ENCODE measurements at regions of chr4 and their contacts with region 1.

Region 1: DNA sequence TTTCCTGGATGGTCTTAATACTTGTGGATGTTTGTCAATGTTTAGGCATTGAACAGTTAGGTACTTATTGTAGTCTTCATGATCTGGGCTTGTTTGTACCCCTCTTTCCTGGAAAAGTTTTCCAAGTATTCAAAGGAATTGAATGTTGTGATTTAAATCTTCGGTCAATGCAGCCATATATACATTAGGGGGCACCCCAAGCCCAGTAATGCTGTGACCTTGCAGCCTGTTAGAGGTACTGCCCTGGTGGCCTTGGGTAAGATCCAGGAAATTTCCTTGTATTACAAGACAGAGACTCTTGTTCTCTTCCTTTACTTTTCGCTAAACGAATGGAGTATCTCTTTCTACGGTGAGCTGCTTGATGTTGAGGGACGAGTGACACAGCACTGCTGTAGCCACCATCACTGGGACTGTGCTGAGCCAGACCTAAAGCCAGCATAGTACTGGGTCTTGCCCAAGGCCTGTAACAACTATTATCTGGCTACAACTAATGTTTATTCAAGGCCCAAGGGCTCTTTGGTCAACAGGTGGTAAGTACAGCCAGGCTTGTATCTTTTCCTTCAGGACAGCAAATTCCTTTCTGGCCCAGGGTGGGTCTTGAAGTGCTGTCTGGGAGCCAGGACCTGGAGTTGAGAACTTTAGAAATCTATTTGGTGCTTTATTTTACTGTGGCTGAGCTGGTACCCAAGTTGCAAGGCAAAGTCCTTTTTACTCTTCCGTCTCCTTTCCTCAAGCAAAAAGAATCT is 118.3 kb upstream of the ATOH1 start:
- DNase-seq: no peak
- ATAC-seq: peak; percentile 10
- H3K4me3 ChIP-seq: no peak overlapping the region
- H3K4me3 Mint-ChIP-seq: no peak overlapping the region
- H3K27ac ChIP-seq: no peak overlapping the region
- H3K27ac Mint-ChIP-seq: no peak overlapping the region
- H3K4me1 ChIP-seq: no peaks in the 10 kb centered on the region
- H3K4me1 Mint-ChIP-seq: no peaks in the 10 kb centered on the region
- H3K27me3 ChIP-seq: no peaks in the 10 kb centered on the region
- H3K27me3 Mint-ChIP-seq: peaks cover 3% of the 10 kb centered on the region
- CTCF ChIP-seq: no peak

Region 2: GRCh38 chr4:93217431-93217830 is 492.8 kb before region 1 on chr4:
- CTCF ChIA-PET with region 1: no interaction called
- POLR2A ChIA-PET with region 1: no interaction called
- intact Hi-C with region 1: no loop called
- DNase-seq: no peak
- ATAC-seq: no peak
- H3K4me3 ChIP-seq: no peak overlapping the region
- H3K4me3 Mint-ChIP-seq: no peak overlapping the region
- H3K27ac ChIP-seq: no peak overlapping the region
- H3K27ac Mint-ChIP-seq: no peak overlapping the region
- H3K4me1 ChIP-seq: no peaks in the 10 kb centered on the region
- H3K4me1 Mint-ChIP-seq: no peaks in the 10 kb centered on the region
- H3K27me3 ChIP-seq: no peaks in the 10 kb centered on the region
- H3K27me3 Mint-ChIP-seq: no peaks in the 10 kb centered on the region
- CTCF ChIP-seq: no peak

Region 3: DNA sequence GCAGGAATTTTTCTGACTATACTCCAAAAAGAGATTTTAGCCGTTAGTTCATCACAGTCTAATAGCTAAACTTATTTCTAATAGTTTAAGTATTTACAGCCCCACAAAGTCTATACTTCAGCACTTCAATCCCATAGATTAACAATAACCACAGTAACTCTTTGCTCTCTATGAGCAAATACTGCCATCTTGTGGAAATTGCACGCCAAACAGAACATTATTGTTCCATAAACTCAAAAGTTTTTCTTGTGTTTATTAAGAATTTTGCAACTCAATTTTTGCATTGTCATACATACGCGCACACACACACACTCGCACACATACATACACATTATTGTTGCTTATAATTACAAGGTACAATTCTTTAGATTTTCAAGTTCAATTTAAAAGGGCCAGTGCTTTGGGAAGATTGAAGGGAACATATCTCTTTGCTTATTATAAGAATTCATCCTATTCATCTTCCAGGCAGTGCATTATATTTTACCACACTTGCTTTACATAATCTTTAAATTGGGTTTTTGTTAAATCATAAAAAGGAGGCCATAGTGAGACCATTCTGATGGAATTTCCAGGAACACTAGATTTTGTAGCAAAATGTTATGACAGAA is 54.5 kb after region 1 on chr4:
- CTCF ChIA-PET with region 1: interaction called, 4 read pairs
- POLR2A ChIA-PET with region 1: no interaction called
- intact Hi-C with region 1: loop called (anchors 1 kb)
- DNase-seq: peak; percentile 17
- ATAC-seq: no peak
- H3K4me3 ChIP-seq: no peak overlapping the region
- H3K4me3 Mint-ChIP-seq: no peak overlapping the region
- H3K27ac ChIP-seq: no peak overlapping the region
- H3K27ac Mint-ChIP-seq: no peak overlapping the region
- H3K4me1 ChIP-seq: no peaks in the 10 kb centered on the region
- H3K4me1 Mint-ChIP-seq: peaks cover under 1% of the 10 kb centered on the region
- H3K27me3 ChIP-seq: peaks cover 0 to 3% (median 0%) of the 10 kb centered on the region in 4 experiments
- H3K27me3 Mint-ChIP-seq: peaks cover 9% of the 10 kb centered on the region
- CTCF ChIP-seq: peak; percentile 71

Region 4: DNA sequence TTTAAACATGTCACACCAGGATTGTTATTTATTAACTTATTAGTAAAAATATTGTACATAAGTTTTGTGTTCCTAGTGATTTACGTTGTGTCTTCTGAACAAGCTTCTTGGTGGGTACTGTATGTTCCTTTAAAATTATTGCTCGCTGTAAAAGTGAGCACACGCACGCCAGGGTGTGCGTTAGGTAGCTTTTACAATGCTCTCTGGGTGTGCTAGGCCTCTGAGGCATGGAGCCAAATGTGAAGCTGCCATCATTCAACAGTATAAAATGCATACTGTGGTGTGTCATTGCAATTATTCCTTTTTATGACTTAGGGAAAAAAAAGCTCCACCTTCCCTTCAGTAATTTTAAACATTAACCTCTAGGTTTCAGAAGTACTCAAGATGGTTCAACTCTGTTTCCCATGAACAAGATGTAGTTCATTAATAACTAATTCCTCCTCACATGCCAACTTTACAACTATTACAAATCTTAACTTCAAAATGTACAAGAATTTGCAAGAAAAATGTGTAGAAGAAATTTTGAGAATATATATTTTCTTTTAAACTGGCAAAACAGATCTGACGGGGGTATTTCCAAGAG is 160.7 kb after region 1 on chr4:
- CTCF ChIA-PET with region 1: no interaction called
- POLR2A ChIA-PET with region 1: no interaction called
- intact Hi-C with region 1: no loop called
- DNase-seq: no peak
- ATAC-seq: no peak
- H3K4me3 ChIP-seq: no peak overlapping the region
- H3K4me3 Mint-ChIP-seq: no peak overlapping the region
- H3K27ac ChIP-seq: no peak overlapping the region
- H3K27ac Mint-ChIP-seq: no peak overlapping the region
- H3K4me1 ChIP-seq: no peaks in the 10 kb centered on the region
- H3K4me1 Mint-ChIP-seq: no peaks in the 10 kb centered on the region
- H3K27me3 ChIP-seq: no peaks in the 10 kb centered on the region
- H3K27me3 Mint-ChIP-seq: no peaks in the 10 kb centered on the region
- CTCF ChIP-seq: no peak

Measured in B cell (primary cell).